Calu3 (cell line): ENCODE measurements at regions of chr3 and their contacts with region 1.

Region 1: DNA sequence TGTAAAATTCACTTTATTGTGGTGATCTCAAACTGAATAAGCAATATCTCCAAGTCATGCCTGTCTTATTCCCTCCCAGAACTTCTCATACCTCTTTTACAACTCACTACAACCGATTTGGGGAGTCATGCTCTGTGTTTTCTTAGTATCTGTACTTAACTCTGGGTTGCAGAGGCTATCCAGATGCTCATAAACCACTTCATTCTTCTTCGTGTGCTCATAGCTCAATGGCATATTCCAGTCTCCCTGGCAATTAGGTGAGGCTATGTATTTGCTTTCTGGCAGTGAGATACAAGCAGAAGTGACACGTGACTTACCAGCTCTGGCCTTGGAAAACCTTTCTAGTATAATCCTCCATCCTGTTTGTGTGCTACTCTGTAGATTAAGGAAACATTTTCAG is 360.9 kb downstream of the ZNF385D start:
- DNase-seq: no peak
- H3K4me3 Mint-ChIP-seq: no peak overlapping the region
- H3K27ac Mint-ChIP-seq: peak overlapping the region; percentile 21
- H3K4me1 Mint-ChIP-seq: peaks cover 23% of the 10 kb centered on the region
- H3K27me3 Mint-ChIP-seq: no peaks in the 10 kb centered on the region
- CTCF ChIP-seq: no peak

Region 2: DNA sequence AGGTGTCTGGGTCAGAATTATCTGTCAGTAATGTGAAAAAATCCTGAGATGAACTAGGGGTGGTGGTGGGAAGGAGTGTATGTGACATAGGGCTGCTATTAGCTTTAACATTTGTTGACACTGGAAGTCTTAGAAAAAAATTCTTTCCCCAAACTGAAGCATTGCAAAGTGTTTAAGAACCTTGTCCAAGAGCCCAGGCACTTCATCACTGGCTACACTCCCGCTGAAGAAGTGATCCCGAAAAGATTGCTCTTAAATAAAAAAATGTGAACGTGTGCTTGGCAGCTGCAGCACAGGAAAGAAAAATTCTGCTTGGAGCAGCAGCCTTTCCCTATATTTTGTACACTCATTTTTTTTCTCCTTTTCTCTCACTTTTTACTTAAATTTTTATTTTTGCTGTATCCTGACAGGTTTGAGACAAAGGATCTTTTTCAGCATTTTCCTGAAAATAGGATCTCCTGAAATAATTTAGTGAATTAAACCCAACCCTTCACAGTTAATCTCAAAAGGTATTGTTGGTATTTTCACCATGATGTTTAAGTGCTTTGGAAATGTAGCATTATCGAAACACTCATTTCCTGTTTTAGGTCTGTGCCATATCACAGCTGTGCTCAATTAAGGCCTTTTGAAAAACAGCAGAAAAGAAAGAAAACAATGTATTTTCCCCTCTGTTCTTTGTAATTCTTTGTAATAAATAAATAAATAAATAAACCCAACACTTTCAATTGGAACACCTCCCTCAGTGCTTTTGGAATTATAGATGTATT is 116.7 kb before region 1 on chr3:
- CTCF ChIA-PET with region 1: no interaction called
- intact Hi-C with region 1: loop called (anchors 5 kb)
- DNase-seq: no peak
- H3K4me3 Mint-ChIP-seq: no peak overlapping the region
- H3K27ac Mint-ChIP-seq: peak overlapping the region; percentile 12
- H3K4me1 Mint-ChIP-seq: peaks cover 18% of the 10 kb centered on the region
- H3K27me3 Mint-ChIP-seq: no peaks in the 10 kb centered on the region
- CTCF ChIP-seq: no peak